ENCODE measurements at regions of chr19 and their contacts with region 1.

Region 1: GRCh38 chr19:8580710-8581281 is 3.6 kb upstream of the MYO1F start:
- DNase-seq: peak; percentile 92
- H3K4me3 Mint-ChIP-seq: no peak overlapping the region
- H3K27ac Mint-ChIP-seq: no peak overlapping the region
- H3K4me1 Mint-ChIP-seq: peaks cover 32% of the 10 kb centered on the region
- H3K27me3 Mint-ChIP-seq: no peaks in the 10 kb centered on the region

Region 2: GRCh38 chr19:8355631-8356402 is 225.0 kb before region 1 on chr19:
- CTCF ChIA-PET with region 1: interaction called, 47 read pairs
- intact Hi-C with region 1: loop called (anchors 1 kb)
- DNase-seq: no peak
- H3K4me3 Mint-ChIP-seq: no peak overlapping the region
- H3K27ac Mint-ChIP-seq: no peak overlapping the region
- H3K4me1 Mint-ChIP-seq: no peaks in the 10 kb centered on the region
- H3K27me3 Mint-ChIP-seq: peaks cover 10% of the 10 kb centered on the region

Region 3: GRCh38 chr19:8477889-8478288 is 102.9 kb before region 1 on chr19:
- CTCF ChIA-PET with region 1: interaction called, 17 read pairs
- intact Hi-C with region 1: no loop called
- DNase-seq: no peak
- H3K4me3 Mint-ChIP-seq: no peak overlapping the region
- H3K27ac Mint-ChIP-seq: peak overlapping the region; percentile 74
- H3K4me1 Mint-ChIP-seq: peaks cover 70% of the 10 kb centered on the region
- H3K27me3 Mint-ChIP-seq: no peaks in the 10 kb centered on the region

Region 4: GRCh38 chr19:8557642-8558238 is 23.1 kb before region 1 on chr19:
- CTCF ChIA-PET with region 1: interaction called, 103 read pairs
- intact Hi-C with region 1: no loop called
- DNase-seq: no peak
- H3K4me3 Mint-ChIP-seq: no peak overlapping the region
- H3K27ac Mint-ChIP-seq: peak overlapping the region; percentile 71
- H3K4me1 Mint-ChIP-seq: peaks cover 11% of the 10 kb centered on the region
- H3K27me3 Mint-ChIP-seq: no peaks in the 10 kb centered on the region

Region 5: GRCh38 chr19:8592231-8593009 is 11.6 kb after region 1 on chr19:
- CTCF ChIA-PET with region 1: interaction called, 36 read pairs
- intact Hi-C with region 1: no loop called
- DNase-seq: peak; percentile 98
- H3K4me3 Mint-ChIP-seq: peak overlapping the region; percentile 78
- H3K27ac Mint-ChIP-seq: no peak overlapping the region
- H3K4me1 Mint-ChIP-seq: peaks cover 10% of the 10 kb centered on the region
- H3K27me3 Mint-ChIP-seq: no peaks in the 10 kb centered on the region

Region 6: DNA sequence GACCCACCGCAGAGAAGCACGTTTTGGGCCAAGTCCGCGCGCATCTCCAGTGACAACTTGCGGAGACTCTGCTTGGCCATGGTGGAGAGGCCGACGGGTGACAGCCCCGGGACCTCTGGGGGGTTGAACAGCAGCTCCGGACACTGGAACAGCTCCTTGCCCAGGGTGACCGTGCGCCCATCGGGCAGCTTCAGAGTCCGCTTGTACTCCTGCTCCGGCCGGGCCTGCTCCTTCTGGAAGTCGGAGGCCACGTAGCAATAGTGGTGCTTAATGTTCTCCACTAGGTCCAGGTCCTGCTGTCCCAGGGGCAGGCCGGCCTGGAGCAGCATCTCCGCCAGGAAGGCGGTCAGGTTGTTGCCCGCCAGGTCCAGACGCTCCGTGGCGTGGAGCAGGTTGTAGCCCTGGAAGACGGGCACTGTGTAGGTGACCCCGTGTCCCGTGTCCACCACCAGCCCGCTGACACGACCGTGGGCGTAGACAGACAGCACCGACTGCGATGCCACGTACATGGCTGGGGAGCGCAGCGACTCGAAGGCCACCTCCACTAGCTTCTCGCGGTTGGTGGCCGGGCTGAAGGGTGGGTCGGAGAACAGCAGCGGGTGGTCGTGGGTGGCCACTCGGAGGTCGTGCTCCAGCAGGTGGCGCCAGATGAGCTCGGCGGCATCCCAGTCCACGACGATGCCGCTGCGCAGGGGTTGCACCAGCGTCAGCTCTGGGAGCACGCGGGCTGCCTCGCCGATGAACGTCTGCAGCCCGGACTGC is 117.1 kb after region 1 on chr19:
- CTCF ChIA-PET with region 1: interaction called, 8 read pairs
- intact Hi-C with region 1: loop called (anchors 2 kb)
- DNase-seq: no peak
- H3K4me3 Mint-ChIP-seq: no peak overlapping the region
- H3K27ac Mint-ChIP-seq: no peak overlapping the region
- H3K4me1 Mint-ChIP-seq: peaks cover 24% of the 10 kb centered on the region
- H3K27me3 Mint-ChIP-seq: peaks cover 3% of the 10 kb centered on the region

Region 7: DNA sequence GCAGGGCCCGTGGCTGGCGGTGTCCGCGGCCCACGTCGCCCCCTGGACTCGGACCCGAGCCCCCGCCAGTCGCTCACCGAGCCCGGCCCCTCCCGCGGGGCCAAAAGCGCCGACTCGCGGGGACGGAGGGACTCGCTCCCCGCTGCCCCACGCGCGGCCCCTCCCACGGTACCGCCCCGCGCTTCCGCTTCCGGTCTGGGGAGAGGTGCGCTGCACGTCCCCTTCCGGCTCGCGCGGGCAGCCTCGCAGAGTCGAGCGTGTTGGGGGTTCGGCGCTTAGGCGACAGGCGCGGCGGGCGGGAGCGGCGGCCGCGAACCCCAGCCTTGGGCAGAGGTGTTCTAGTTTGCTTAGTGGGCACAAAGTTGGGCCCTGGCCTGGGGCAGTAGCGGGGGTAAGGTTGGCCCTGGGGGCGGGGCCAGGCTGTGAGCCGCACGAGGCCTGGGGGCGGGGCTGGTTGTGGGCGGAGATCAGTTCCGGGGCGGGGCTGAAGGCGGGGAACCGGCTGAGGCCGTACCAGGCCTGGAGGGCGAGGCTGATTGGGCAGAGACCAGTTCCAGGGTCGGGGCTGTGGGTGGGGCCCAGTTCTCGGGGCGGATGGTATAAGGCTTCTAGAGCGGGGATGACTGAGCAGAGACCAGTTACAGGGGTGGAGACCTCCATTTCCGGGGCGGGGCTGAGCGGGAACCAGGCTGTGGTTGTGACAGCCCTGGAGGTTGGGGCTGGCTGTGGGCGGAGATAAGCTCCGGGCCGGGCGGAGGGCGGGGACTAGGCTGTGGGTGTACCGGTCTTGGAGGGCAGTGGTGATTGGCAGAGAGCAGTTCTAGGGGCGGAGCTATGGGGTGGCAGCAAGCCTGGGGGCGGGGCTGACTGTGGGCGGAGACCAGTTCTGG is 251.6 kb after region 1 on chr19 and contains the starts of genes MBD3L1 and ZNF558:
- CTCF ChIA-PET with region 1: no interaction called
- intact Hi-C with region 1: no loop called
- DNase-seq: peak; percentile 100
- H3K4me3 Mint-ChIP-seq: peak within 1 kb of the TSS; percentile 82
- H3K27ac Mint-ChIP-seq: peak within 1 kb of the TSS; percentile 86
- H3K4me1 Mint-ChIP-seq: peaks cover 19% of the 10 kb centered on the region
- H3K27me3 Mint-ChIP-seq: no peaks in the 10 kb centered on the region
- total RNA-seq, gene MBD3L1: not detected
- total RNA-seq, gene ZNF558: 23.9 to 24.4 TPM